Mammary epithelial cell (primary cell): ENCODE measurements at regions of chr6 and their contacts with region 1.

Region 1: GRCh38 chr6:165055231-165055630 is 254.2 kb downstream of the C6orf118 start:
- DNase-seq: no peak
- H3K4me3 ChIP-seq: no peak overlapping the region
- H3K27ac ChIP-seq: no peak overlapping the region
- H3K4me1 ChIP-seq: no peaks in the 10 kb centered on the region
- H3K27me3 ChIP-seq: no peaks in the 10 kb centered on the region
- CTCF ChIP-seq: peak in 1 of 2 donors; percentile 25

Region 2: GRCh38 chr6:164990766-164991285 is 64.4 kb before region 1 on chr6:
- CTCF ChIA-PET with region 1: no interaction called
- dilution Hi-C with region 1: no loop called
- in situ Hi-C with region 1: no loop called
- intact Hi-C with region 1: no loop called
- DNase-seq: no peak
- H3K4me3 ChIP-seq: no peak overlapping the region
- H3K27ac ChIP-seq: no peak overlapping the region
- H3K4me1 ChIP-seq: no peaks in the 10 kb centered on the region
- H3K27me3 ChIP-seq: no peaks in the 10 kb centered on the region
- CTCF ChIP-seq: no peak

Region 3: DNA sequence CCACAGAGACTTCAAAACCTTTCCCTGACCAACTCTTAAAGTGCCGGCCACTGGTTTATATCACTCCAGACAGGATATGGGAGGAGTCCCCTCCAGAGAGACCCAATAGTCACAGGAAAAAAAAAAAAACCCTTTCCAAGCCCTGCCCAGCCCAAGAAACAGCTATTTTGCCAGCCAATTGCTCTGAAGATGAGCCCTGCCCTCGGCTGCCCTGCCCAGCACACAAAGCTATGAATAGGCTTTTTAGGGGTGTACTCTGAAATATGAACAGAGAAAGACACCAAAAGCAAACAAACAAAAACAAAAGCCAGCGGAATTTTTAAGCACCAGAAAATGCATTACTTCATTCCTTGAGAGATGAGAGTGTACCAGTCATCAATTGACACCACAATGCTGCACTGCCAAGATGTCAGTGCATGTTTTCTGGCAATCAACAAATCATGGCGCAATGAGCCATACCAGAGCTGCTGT is 20.9 kb before region 1 on chr6:
- CTCF ChIA-PET with region 1: no interaction called
- dilution Hi-C with region 1: no loop called
- in situ Hi-C with region 1: no loop called
- intact Hi-C with region 1: no loop called
- DNase-seq: no peak
- H3K4me3 ChIP-seq: no peak overlapping the region
- H3K27ac ChIP-seq: no peak overlapping the region
- H3K4me1 ChIP-seq: no peaks in the 10 kb centered on the region
- H3K27me3 ChIP-seq: no peaks in the 10 kb centered on the region
- CTCF ChIP-seq: no peak

Region 4: DNA sequence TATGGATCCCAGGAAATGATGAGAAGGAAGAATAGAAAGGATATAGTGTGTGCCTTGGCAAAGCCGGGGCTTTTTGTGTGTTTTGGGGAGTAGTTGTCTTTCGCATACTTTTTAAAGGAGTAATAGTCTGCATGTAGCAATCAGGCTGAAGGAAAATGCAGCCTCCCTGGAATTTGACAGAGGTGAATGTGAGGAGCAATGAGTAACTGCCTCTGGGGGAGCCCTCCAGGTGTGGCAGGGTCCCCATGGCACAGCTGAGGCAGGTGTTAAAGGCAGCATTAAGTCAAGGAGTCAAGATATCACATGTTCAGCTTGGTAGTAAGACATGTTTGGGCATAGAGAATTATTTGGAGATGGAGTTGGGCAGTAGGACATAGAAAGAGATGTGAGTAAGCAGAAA is 51.0 kb after region 1 on chr6:
- CTCF ChIA-PET with region 1: no interaction called
- dilution Hi-C with region 1: no loop called
- in situ Hi-C with region 1: no loop called
- intact Hi-C with region 1: loop called (anchors 2 kb)
- DNase-seq: peak; percentile 21
- H3K4me3 ChIP-seq: no peak overlapping the region
- H3K27ac ChIP-seq: peak overlapping the region; percentile 51
- H3K4me1 ChIP-seq: no peaks in the 10 kb centered on the region
- H3K27me3 ChIP-seq: no peaks in the 10 kb centered on the region
- CTCF ChIP-seq: no peak

Region 5: GRCh38 chr6:165191461-165191860 is 136.2 kb after region 1 on chr6:
- CTCF ChIA-PET with region 1: no interaction called
- dilution Hi-C with region 1: no loop called
- in situ Hi-C with region 1: no loop called
- intact Hi-C with region 1: loop called (anchors 1 kb)
- DNase-seq: no peak
- H3K4me3 ChIP-seq: no peak overlapping the region
- H3K27ac ChIP-seq: no peak overlapping the region
- H3K4me1 ChIP-seq: no peaks in the 10 kb centered on the region
- H3K27me3 ChIP-seq: no peaks in the 10 kb centered on the region
- CTCF ChIP-seq: no peak

Region 6: DNA sequence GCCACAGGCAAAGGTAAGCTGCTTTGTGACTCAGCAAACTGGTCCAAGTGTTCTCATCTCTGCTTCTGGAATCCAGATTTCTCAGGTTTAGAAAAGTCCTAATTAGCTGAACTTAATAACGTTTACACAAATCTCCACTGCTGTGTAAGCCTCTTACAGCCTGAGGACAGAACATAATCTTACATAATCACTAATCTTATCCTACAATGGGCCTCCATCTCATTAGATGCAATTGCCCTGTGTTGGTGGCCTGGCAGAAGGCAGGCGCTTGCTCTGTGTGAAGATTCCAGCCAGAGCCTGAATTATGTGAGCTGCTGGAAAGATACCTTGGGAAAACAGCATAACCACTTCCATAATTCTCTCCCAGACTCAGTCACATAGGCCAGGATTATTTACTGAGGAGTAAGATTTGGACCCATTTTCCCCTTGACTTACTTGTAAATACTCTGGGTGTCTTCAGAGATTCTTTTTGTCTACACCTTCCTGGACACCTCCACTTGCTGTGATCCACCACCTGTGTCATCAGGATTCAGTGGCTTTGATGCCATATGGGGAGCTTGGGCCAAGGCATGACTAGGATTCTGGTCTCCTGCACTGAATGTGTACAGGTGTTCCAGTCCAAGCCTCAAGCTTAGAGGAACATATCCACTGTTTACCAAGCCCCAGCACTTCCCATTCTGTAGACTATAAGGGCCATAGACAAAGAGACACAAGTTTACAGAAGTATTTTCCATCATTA is 149.7 kb after region 1 on chr6:
- CTCF ChIA-PET with region 1: no interaction called
- dilution Hi-C with region 1: no loop called
- in situ Hi-C with region 1: no loop called
- intact Hi-C with region 1: no loop called
- DNase-seq: no peak
- H3K4me3 ChIP-seq: no peak overlapping the region
- H3K27ac ChIP-seq: no peak overlapping the region
- H3K4me1 ChIP-seq: no peaks in the 10 kb centered on the region
- H3K27me3 ChIP-seq: no peaks in the 10 kb centered on the region
- CTCF ChIP-seq: no peak

Region 7: GRCh38 chr6:165231581-165232561 is 176.6 kb after region 1 on chr6:
- CTCF ChIA-PET with region 1: interaction called, 5 read pairs
- dilution Hi-C with region 1: no loop called
- in situ Hi-C with region 1: loop called in 1 of 2 experiments (anchors 10 kb)
- intact Hi-C with region 1: loop called (anchors 1 kb)
- DNase-seq: peak; percentile 0
- H3K4me3 ChIP-seq: no peak overlapping the region
- H3K27ac ChIP-seq: no peak overlapping the region
- H3K4me1 ChIP-seq: no peaks in the 10 kb centered on the region
- H3K27me3 ChIP-seq: no peaks in the 10 kb centered on the region
- CTCF ChIP-seq: peak; percentile 45 to 58

Region 8: GRCh38 chr6:165245287-165245686 is 190.1 kb after region 1 on chr6:
- CTCF ChIA-PET with region 1: interaction called, 8 read pairs
- dilution Hi-C with region 1: no loop called
- in situ Hi-C with region 1: no loop called
- intact Hi-C with region 1: loop called (anchors 5 kb)
- DNase-seq: no peak
- H3K4me3 ChIP-seq: no peak overlapping the region
- H3K27ac ChIP-seq: no peak overlapping the region
- H3K4me1 ChIP-seq: no peaks in the 10 kb centered on the region
- H3K27me3 ChIP-seq: no peaks in the 10 kb centered on the region
- CTCF ChIP-seq: peak; percentile 11 to 42